ENCODE measurements at regions of chr11 and their contacts with region 1.

Region 1: DNA sequence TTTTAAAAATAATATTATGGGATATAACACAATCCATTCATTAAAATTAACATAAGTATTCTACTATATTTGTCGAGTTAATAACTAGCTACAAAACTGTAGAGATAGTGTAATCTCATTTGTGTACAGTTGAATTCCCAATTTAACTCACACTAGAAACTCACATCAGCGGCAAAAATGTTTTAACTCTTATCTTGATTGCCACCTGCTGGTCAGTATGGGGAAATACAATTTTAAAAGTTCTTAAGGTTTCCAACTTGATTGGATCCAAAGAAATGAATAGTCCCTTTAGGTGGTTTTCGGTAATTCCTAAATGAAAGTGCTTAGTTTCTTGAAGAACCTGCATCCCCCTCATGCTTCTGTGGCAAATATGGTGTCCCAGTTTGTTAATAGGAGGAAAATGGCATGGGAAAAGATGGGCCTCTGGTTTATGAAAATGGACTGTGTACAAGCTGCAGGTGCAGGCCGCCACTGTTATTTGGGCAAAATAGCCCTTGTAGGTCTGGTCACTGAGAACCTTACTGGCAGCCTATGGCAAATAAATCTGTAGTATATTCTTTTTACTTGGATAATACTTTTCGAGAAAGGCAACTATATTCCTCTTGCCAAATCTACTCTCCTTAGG is 33.7 kb upstream of the SLC17A6 start:
- DNase-seq: no peak
- ATAC-seq: no peak

Region 2: DNA sequence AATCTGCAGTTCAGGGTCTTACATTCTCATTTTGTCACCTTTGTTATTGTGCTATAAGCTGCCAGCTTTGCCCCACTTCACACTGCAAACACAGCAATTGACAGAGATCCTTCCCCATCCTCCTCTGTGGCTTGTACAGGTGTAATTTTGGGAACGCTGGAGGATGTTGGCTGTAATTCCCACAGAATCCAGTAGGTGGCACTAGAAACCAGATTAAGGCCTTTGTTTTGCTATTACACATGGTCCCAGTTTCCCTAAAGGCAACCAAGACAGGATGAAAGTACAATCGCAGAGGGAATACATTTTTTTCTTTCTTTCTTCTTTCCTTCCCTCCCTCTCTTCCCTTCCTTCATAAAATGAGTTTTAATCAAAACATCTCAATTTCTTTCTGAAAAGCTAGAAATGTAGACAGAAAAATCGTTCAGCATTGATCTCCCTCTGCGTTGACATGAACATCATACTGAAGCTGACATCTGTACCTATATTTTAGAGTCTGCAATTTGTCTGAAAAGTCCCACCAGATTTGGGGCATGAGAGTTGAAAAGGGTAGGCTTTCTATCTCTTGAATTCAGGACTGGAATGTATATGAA is 1656.4 kb before region 1 on chr11:
- intact Hi-C with region 1: loop called in 1 of 2 experiments (anchors 10 kb)
- DNase-seq: no peak
- ATAC-seq: peak; percentile 30 to 53

Region 3: DNA sequence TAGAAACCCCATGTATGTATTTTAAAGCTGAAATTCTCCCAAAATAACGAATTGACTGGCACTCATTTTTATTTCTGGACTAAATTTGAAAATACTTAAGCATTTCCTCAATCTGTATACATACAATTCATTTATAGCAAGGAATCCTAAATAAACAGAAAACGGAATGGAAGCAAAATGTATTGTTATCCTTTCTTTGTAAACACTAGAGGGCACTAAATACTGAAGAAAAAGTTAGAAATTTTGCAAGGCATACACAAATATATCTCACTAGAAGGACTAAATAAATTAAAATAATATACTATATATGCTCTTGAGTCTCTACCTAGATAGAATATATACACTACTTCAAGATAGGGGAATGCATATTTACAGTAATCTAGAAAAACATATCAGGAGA is 134.6 kb before region 1 on chr11:
- intact Hi-C with region 1: loop called (anchors 5 kb)
- DNase-seq: no peak
- ATAC-seq: no peak